ENCODE measurements at regions of chr2 and their contacts with region 1.

Region 1: GRCh38 chr2:152175458-152176325 is at the start of gene STAM2:
- DNase-seq: peak; percentile 92 to 95
- ATAC-seq: peak; percentile 91 to 98 (median 96)
- H3K4me3 ChIP-seq: peak within 1 kb of the TSS; percentile 56 to 98 (median 76)
- H3K27ac ChIP-seq: peak within 1 kb of the TSS; percentile 92 to 99 (median 96)
- H3K4me1 ChIP-seq: peaks cover 2 to 46% (median 31%) of the 10 kb centered on the region in 9 donors
- H3K27me3 ChIP-seq: no peaks in the 10 kb centered on the region
- CTCF ChIP-seq: peak; percentile 87 to 99 (median 97)
- total RNA-seq, gene STAM2: 22.4 to 35.9 (median 27.2) TPM

Region 2: DNA sequence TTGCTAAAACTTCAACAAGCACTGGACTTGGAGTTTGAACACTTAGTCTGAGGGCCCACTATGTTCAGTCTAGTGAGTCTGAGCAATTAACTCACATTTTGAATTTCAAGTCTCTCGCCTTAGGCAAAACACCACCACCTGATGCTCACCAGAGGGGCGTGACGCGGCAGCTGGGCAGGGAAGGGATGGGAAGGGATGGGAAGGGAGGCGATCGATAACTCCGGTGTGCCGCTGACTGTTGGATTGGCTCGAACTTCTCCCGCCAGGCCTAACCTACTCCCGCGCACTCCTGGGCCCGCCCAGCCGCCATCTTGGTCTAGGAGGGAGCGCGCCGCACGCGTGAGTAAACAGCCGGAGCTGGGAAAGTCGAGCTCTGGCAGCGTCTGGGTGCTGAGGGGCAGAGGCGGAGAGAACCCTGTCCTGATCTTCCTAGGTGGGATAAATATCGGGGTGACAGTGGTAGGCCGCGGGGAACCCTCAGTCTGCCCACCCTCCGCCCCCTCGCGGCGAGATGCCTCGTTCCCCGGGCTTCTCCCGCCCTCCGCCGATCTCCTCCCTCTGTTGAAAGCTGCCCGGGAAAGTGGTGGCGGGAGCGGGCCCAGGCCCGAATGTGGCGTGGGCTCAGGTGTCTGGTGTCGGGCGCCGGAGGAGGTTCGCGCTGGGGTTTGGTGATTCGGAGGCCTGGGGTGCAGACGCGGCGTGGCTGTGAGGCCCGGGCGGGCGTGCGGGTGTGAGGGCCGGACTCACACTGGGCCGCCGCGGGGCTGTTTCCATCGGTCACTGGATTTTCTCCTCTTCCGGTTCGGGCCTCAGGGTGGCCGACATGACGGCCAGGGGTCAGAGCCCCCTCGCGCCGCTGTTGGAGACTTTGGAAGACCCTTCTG is 765.8 kb before region 1 on chr2 and contains the start of gene RIF1:
- intact Hi-C with region 1: no loop called
- DNase-seq: peak; percentile 85 to 90
- ATAC-seq: peak; percentile 99 to 100 (median 99)
- H3K4me3 ChIP-seq: peak within 1 kb of the TSS; percentile 83 to 100 (median 94)
- H3K27ac ChIP-seq: peak within 1 kb of the TSS; percentile 81 to 99 (median 90)
- H3K4me1 ChIP-seq: peaks cover 0 to 22% (median 12%) of the 10 kb centered on the region in 9 donors
- H3K27me3 ChIP-seq: no peaks in the 10 kb centered on the region
- CTCF ChIP-seq: peak; percentile 42 to 89 (median 61)
- total RNA-seq, gene RIF1: 11.7 to 19.3 (median 15.8) TPM

Region 3: GRCh38 chr2:152134488-152135280 is 41.0 kb before region 1 on chr2:
- intact Hi-C with region 1: no loop called
- DNase-seq: no peak
- ATAC-seq: peak in 2 of 8 donors; percentile 33 to 45
- H3K4me3 ChIP-seq: no peak overlapping the region
- H3K27ac ChIP-seq: no peak overlapping the region
- H3K4me1 ChIP-seq: peaks cover 0 to 11% (median 0%) of the 10 kb centered on the region in 9 donors
- H3K27me3 ChIP-seq: no peaks in the 10 kb centered on the region
- CTCF ChIP-seq: no peak

Region 4: GRCh38 chr2:152227969-152228592 is 52.4 kb after region 1 on chr2:
- intact Hi-C with region 1: no loop called
- DNase-seq: no peak
- ATAC-seq: no peak
- H3K4me3 ChIP-seq: no peak overlapping the region
- H3K27ac ChIP-seq: peak overlapping the region in 1 of 10 donors; percentile 12
- H3K4me1 ChIP-seq: peaks cover 0 to 17% (median 12%) of the 10 kb centered on the region in 9 donors
- H3K27me3 ChIP-seq: no peaks in the 10 kb centered on the region
- CTCF ChIP-seq: no peak

Region 5: GRCh38 chr2:152717228-152718075 is 541.8 kb after region 1 on chr2 and contains the start of gene PRPF40A:
- intact Hi-C with region 1: loop called in 2 of 10 experiments (anchors 5 kb)
- DNase-seq: peak; percentile 99
- ATAC-seq: peak; percentile 94 to 97 (median 96)
- H3K4me3 ChIP-seq: peak within 1 kb of the TSS; percentile 60 to 97 (median 88)
- H3K27ac ChIP-seq: peak within 1 kb of the TSS; percentile 86 to 99 (median 98)
- H3K4me1 ChIP-seq: peaks cover 0 to 57% (median 37%) of the 10 kb centered on the region in 9 donors
- H3K27me3 ChIP-seq: no peaks in the 10 kb centered on the region
- CTCF ChIP-seq: peak in 1 of 9 donors; percentile 6
- total RNA-seq, gene PRPF40A: 29.3 to 51.8 (median 34.0) TPM

Measured in heart right ventricle (tissue), 16 donors.